ENCODE measurements at regions of chr7 and their contacts with region 1.

Region 1: GRCh38 chr7:151448261-151449252 is 8.6 kb upstream of the CRYGN start:
- DNase-seq: peak; percentile 63 to 90 (median 81)
- ATAC-seq: peak; percentile 90
- H3K4me3 ChIP-seq: peak overlapping the region; percentile 53 to 74
- H3K4me3 Mint-ChIP-seq: peak overlapping the region; percentile 86
- H3K27ac ChIP-seq: peak overlapping the region; percentile 16 to 40
- H3K27ac Mint-ChIP-seq: peak overlapping the region; percentile 85
- H3K4me1 ChIP-seq: peaks cover 3% of the 10 kb centered on the region
- H3K4me1 Mint-ChIP-seq: peaks cover 8% of the 10 kb centered on the region
- H3K27me3 ChIP-seq: no peaks in the 10 kb centered on the region
- H3K27me3 Mint-ChIP-seq: peaks cover 7% of the 10 kb centered on the region
- CTCF ChIP-seq: peak; percentile 65

Region 2: GRCh38 chr7:150489782-150490181 is 958.8 kb before region 1 on chr7:
- CTCF ChIA-PET with region 1: no interaction called
- POLR2A ChIA-PET with region 1: no interaction called
- intact Hi-C with region 1: no loop called
- DNase-seq: no peak
- ATAC-seq: no peak
- H3K4me3 ChIP-seq: no peak overlapping the region
- H3K4me3 Mint-ChIP-seq: no peak overlapping the region
- H3K27ac ChIP-seq: no peak overlapping the region
- H3K27ac Mint-ChIP-seq: no peak overlapping the region
- H3K4me1 ChIP-seq: peaks cover 27% of the 10 kb centered on the region
- H3K4me1 Mint-ChIP-seq: peaks cover 45% of the 10 kb centered on the region
- H3K27me3 ChIP-seq: no peaks in the 10 kb centered on the region
- H3K27me3 Mint-ChIP-seq: no peaks in the 10 kb centered on the region
- CTCF ChIP-seq: no peak

Region 3: GRCh38 chr7:151003572-151003971 is 445.0 kb before region 1 on chr7:
- CTCF ChIA-PET with region 1: no interaction called
- POLR2A ChIA-PET with region 1: no interaction called
- intact Hi-C with region 1: no loop called
- DNase-seq: no peak
- ATAC-seq: no peak
- H3K4me3 ChIP-seq: no peak overlapping the region
- H3K4me3 Mint-ChIP-seq: no peak overlapping the region
- H3K27ac ChIP-seq: no peak overlapping the region
- H3K27ac Mint-ChIP-seq: no peak overlapping the region
- H3K4me1 ChIP-seq: peaks cover 40% of the 10 kb centered on the region
- H3K4me1 Mint-ChIP-seq: peaks cover 25% of the 10 kb centered on the region
- H3K27me3 ChIP-seq: no peaks in the 10 kb centered on the region
- H3K27me3 Mint-ChIP-seq: no peaks in the 10 kb centered on the region
- CTCF ChIP-seq: no peak

Region 4: GRCh38 chr7:151320263-151320845 is 128.2 kb before region 1 on chr7:
- CTCF ChIA-PET with region 1: interaction called, 63 read pairs
- POLR2A ChIA-PET with region 1: interaction called, 6 read pairs
- intact Hi-C with region 1: loop called (anchors 1 kb)
- DNase-seq: no peak
- ATAC-seq: no peak
- H3K4me3 ChIP-seq: no peak overlapping the region
- H3K4me3 Mint-ChIP-seq: no peak overlapping the region
- H3K27ac ChIP-seq: no peak overlapping the region
- H3K27ac Mint-ChIP-seq: no peak overlapping the region
- H3K4me1 ChIP-seq: no peaks in the 10 kb centered on the region
- H3K4me1 Mint-ChIP-seq: no peaks in the 10 kb centered on the region
- H3K27me3 ChIP-seq: no peaks in the 10 kb centered on the region
- H3K27me3 Mint-ChIP-seq: no peaks in the 10 kb centered on the region
- CTCF ChIP-seq: no peak

Region 5: DNA sequence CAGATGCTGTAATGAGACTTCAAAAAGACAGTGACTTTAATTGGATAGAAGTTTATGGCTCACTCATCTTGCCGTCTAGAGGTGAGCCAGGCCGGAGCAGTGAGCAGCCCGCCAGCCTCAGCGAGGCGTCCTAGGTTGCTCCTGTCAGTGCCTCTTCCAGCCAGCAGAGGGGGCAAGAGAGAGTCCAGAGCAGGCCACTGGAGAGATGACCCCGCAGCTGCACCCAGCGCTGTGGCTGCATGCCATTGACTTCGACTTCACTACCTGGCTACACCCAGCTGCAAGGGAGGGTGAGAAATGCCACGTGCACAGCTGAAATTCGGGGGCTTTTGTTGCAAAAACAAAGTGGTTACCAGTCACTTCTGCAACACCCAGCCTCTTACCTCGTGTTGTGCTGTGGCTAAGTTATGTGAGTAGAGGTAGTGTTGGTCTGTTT is 80.4 kb before region 1 on chr7:
- CTCF ChIA-PET with region 1: interaction called, 248 read pairs
- POLR2A ChIA-PET with region 1: interaction called, 6 read pairs
- intact Hi-C with region 1: loop called (anchors 1 kb)
- DNase-seq: peak; percentile 56 to 86 (median 77)
- ATAC-seq: peak; percentile 97
- H3K4me3 ChIP-seq: no peak overlapping the region
- H3K4me3 Mint-ChIP-seq: no peak overlapping the region
- H3K27ac ChIP-seq: no peak overlapping the region
- H3K27ac Mint-ChIP-seq: peak overlapping the region; percentile 64
- H3K4me1 ChIP-seq: peaks cover 9% of the 10 kb centered on the region
- H3K4me1 Mint-ChIP-seq: peaks cover 18% of the 10 kb centered on the region
- H3K27me3 ChIP-seq: no peaks in the 10 kb centered on the region
- H3K27me3 Mint-ChIP-seq: no peaks in the 10 kb centered on the region
- CTCF ChIP-seq: peak; percentile 96

Region 6: DNA sequence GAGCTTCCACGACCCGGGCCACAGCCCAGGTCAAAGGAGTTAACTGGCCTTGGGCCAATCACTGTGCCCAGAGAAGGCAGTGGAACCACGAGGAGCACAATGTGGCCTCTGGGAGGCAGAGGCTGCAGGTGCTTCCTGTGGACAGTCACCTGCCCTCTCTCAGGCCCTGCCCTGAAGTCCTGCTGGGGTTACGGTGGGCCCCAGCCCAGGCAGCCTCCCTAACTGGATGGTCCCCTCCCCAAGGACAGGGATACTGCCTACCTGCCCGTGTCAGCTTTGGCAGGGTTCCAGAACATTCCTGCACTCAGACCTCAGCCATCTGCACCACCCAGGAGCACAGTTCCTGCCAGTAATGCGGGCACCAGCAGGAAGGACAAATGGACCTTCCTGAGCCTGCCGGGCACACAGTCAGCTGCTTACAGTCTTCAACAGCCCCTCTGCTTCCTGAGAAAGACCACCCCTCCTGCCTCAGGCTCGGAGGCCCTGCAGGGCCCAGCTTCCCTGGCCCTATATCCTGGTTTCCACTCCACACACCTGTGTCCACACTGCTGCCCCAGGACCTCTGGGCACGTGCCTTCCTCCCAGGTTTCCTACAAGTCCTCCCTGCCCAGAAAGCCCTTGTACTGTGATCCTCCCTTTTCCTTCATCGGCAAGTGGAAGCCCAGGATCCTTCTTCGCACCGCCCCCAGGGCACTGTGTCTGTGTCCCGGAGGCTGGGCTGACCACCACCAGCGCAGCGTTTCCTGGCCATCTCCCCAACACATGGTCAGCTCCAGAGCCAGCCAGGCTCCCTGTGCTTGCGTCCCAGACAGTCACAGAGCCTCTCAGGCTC is 62.0 kb before region 1 on chr7:
- CTCF ChIA-PET with region 1: interaction called, 12 read pairs
- POLR2A ChIA-PET with region 1: no interaction called
- intact Hi-C with region 1: loop called in 1 of 2 experiments (anchors 1 kb)
- DNase-seq: no peak
- ATAC-seq: no peak
- H3K4me3 ChIP-seq: no peak overlapping the region
- H3K4me3 Mint-ChIP-seq: no peak overlapping the region
- H3K27ac ChIP-seq: no peak overlapping the region
- H3K27ac Mint-ChIP-seq: peak overlapping the region; percentile 27
- H3K4me1 ChIP-seq: peaks cover 11% of the 10 kb centered on the region
- H3K4me1 Mint-ChIP-seq: peaks cover 11% of the 10 kb centered on the region
- H3K27me3 ChIP-seq: peaks cover 6 to 7% of the 10 kb centered on the region in 2 experiments
- H3K27me3 Mint-ChIP-seq: peaks cover 11% of the 10 kb centered on the region
- CTCF ChIP-seq: no peak

Region 7: GRCh38 chr7:151426486-151426905 is 22.1 kb before region 1 on chr7:
- CTCF ChIA-PET with region 1: interaction called, 46 read pairs
- POLR2A ChIA-PET with region 1: interaction called, 14 read pairs
- intact Hi-C with region 1: loop called (anchors 1 to 2 kb)
- DNase-seq: no peak
- ATAC-seq: no peak
- H3K4me3 ChIP-seq: no peak overlapping the region
- H3K4me3 Mint-ChIP-seq: no peak overlapping the region
- H3K27ac ChIP-seq: no peak overlapping the region
- H3K27ac Mint-ChIP-seq: no peak overlapping the region
- H3K4me1 ChIP-seq: peaks cover 49% of the 10 kb centered on the region
- H3K4me1 Mint-ChIP-seq: peaks cover 41% of the 10 kb centered on the region
- H3K27me3 ChIP-seq: no peaks in the 10 kb centered on the region
- H3K27me3 Mint-ChIP-seq: no peaks in the 10 kb centered on the region
- CTCF ChIP-seq: no peak

Measured in CD8-positive, alpha-beta T cell (primary cell).